ENCODE measurements at regions of chr1 and their contacts with region 1.

Region 1: DNA sequence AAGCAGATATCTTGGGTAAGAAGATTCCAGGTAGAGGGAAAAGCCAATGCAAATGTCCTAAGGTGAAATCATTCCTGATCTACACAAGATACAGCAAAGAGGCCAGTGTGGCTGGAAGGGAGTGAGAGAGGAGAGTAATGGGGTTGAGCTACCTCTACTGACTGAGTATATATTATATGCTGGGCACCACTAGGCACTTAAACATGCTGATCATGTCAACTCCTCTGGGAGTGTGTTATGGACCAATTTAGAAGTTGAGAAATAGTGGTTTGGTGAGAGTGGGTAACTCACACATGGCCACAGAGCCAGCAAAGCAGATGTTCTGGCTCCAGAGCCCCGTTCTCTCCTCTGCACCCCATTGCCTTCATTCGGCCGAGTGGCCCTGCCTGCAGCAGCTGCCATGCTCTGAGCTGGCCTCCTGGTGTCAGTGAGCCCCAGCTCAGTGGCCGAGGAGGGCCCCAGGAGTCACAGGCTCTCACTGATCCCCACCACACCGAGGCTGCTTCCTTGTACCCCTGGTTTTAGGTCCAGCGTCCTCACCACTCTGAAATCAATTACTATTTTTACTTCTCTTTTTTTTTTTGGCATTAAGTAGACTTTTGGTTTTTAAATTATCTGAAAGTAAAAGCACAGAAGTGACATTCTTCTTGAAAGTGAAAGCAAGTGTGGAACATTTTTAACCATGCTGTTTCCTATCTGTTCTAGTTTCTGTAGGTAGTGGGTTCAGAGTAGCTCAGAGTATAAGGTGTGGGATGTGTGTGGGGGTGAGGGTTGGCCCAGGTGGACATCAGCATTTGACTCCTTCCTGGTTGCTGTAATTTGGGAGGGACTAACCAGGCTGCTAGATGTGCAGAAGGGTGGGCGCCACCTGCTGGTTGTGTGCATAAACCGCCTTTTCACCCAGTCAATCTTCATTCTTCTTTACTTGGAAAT is 45.8 kb upstream of the CRNN start:
- DNase-seq: peak; percentile 77
- H3K4me3 ChIP-seq: peak overlapping the region; percentile 9
- H3K27ac ChIP-seq: no peak overlapping the region
- H3K4me1 ChIP-seq: peaks cover 5% of the 10 kb centered on the region
- CTCF ChIP-seq: peak; percentile 96

Region 2: GRCh38 chr1:152347116-152347728 is 112.6 kb before region 1 on chr1:
- CTCF ChIA-PET with region 1: interaction called, 3 read pairs
- POLR2A ChIA-PET with region 1: no interaction called
- intact Hi-C with region 1: loop called (anchors 5 kb)
- DNase-seq: peak; percentile 58
- H3K4me3 ChIP-seq: no peak overlapping the region
- H3K27ac ChIP-seq: no peak overlapping the region
- H3K4me1 ChIP-seq: no peaks in the 10 kb centered on the region
- CTCF ChIP-seq: peak; percentile 92

Region 3: DNA sequence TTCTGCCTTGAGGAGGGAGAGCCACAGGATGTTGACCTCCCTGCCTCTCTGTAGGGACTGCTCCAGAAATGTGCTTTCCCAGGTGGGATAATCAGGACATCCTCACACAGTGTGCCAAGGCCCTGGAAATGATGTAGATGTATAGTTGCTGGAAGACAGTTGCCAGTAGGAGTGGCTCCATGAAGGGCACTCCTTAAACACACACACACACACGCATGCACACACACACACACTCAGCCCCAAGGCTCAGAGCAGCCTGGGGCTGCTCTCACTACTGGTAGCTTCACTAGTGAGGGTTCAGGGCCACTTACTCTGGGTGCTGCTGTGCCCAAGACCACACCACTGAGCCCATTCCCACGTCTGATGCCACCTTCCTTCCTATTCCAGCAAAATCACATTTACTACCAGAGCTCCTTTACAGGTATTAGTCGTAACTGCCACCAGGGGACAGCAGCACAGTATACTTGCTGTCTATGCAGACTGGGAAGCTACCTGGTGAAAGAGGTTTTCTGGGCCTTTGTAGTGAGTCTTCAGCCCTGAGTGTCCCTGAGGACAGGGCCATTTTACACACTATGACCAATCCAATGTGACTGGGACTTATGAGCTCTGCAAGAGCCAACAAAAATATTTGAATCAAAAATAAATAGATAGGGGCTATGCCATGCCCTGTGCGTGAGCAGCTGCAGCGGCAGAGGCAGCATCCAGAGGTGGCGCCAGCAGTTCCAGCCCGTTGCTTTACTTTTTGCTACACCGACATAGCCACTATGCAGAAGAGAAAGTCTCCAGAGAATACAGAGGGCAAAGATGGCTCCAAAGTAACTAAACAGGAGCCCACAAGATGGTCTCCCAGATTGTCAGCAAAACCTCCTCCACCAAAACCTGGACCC is 60.8 kb before region 1 on chr1:
- CTCF ChIA-PET with region 1: interaction called, 6 read pairs
- POLR2A ChIA-PET with region 1: no interaction called
- intact Hi-C with region 1: loop called (anchors 1 kb)
- DNase-seq: peak; percentile 3
- H3K4me3 ChIP-seq: no peak overlapping the region
- H3K27ac ChIP-seq: no peak overlapping the region
- H3K4me1 ChIP-seq: no peaks in the 10 kb centered on the region
- CTCF ChIP-seq: peak; percentile 61

Measured in OCI-LY7 (cell line).